A673 (cell line): ENCODE measurements at regions of chr11 and their contacts with region 1.

Region 1: GRCh38 chr11:44621140-44621681 is 55.7 kb downstream of the CD82 start:
- DNase-seq: peak; percentile 90
- H3K4me3 ChIP-seq: no peak overlapping the region
- H3K27ac ChIP-seq: no peak overlapping the region
- H3K4me1 ChIP-seq: peaks cover 9% of the 10 kb centered on the region
- H3K27me3 ChIP-seq: no peaks in the 10 kb centered on the region
- CTCF ChIP-seq: peak; percentile 100

Region 2: DNA sequence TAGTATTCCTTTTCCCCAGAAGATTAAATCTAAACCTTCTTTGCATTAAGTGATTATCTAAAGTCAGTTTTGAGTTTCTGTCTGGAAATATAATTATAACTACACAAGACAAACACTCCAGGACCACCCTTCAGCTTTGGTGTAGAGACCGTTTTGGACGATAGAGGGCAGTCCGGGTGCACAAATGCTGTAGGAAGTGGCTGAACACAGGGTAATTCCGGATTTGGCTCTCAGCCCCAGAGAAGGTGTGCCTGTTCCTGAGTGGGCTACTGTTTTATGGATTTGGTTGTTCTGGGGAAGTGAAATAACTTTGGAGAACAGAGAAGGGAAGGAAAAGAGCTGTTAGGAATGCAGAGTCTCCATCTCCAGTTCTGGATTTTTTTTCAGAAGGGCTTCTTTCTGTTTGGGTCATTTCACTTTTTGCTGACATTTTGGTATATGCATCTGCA is 511.0 kb before region 1 on chr11:
- CTCF ChIA-PET with region 1: interaction called, 14 read pairs
- POLR2A ChIA-PET with region 1: no interaction called
- intact Hi-C with region 1: loop called (anchors 1 kb)
- DNase-seq: peak; percentile 90
- H3K4me3 ChIP-seq: no peak overlapping the region
- H3K27ac ChIP-seq: no peak overlapping the region
- H3K4me1 ChIP-seq: peaks cover 32% of the 10 kb centered on the region
- H3K27me3 ChIP-seq: no peaks in the 10 kb centered on the region
- CTCF ChIP-seq: peak; percentile 100

Region 3: DNA sequence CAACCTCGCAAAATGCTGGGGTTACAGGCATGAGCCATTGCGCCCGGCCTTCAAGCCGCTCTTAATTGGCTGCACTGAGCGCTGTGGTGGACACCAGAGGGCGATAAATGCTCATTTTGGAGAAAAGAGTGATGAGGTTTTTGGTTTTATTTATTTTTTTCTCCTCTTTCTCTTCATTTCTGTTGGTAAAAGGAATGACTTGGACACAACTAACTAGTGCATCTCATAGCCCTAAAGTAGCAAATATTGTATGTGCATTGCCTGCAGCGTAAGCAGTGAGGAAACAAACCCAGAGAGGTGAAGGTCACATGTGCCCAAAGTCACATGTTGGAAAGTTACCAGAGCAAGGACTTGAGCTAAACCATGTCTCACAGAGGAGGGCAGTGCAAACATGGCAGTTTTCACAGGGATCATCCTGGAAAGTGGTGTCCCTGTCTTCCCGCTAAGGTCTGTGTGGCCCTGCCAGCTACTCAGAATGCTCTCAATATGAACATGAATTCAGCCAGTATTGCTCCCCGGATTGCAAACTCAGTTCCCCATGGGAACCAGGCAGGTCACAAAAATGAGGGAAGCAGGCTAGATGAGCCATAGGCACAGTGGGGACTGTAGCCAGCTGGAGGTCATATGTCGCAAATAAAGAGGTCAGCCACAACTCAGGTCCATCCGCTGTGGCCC is 64.3 kb before region 1 on chr11:
- CTCF ChIA-PET with region 1: interaction called, 110 read pairs
- POLR2A ChIA-PET with region 1: no interaction called
- intact Hi-C with region 1: loop called (anchors 1 kb)
- DNase-seq: peak; percentile 82
- H3K4me3 ChIP-seq: no peak overlapping the region
- H3K27ac ChIP-seq: no peak overlapping the region
- H3K4me1 ChIP-seq: peaks cover 5% of the 10 kb centered on the region
- H3K27me3 ChIP-seq: no peaks in the 10 kb centered on the region
- CTCF ChIP-seq: peak; percentile 92

Region 4: GRCh38 chr11:44585421-44585820 is 35.8 kb before region 1 on chr11:
- CTCF ChIA-PET with region 1: interaction called, 10 read pairs
- POLR2A ChIA-PET with region 1: no interaction called
- intact Hi-C with region 1: no loop called
- DNase-seq: no peak
- H3K4me3 ChIP-seq: no peak overlapping the region
- H3K27ac ChIP-seq: no peak overlapping the region
- H3K4me1 ChIP-seq: no peaks in the 10 kb centered on the region
- H3K27me3 ChIP-seq: no peaks in the 10 kb centered on the region
- CTCF ChIP-seq: no peak

Region 5: DNA sequence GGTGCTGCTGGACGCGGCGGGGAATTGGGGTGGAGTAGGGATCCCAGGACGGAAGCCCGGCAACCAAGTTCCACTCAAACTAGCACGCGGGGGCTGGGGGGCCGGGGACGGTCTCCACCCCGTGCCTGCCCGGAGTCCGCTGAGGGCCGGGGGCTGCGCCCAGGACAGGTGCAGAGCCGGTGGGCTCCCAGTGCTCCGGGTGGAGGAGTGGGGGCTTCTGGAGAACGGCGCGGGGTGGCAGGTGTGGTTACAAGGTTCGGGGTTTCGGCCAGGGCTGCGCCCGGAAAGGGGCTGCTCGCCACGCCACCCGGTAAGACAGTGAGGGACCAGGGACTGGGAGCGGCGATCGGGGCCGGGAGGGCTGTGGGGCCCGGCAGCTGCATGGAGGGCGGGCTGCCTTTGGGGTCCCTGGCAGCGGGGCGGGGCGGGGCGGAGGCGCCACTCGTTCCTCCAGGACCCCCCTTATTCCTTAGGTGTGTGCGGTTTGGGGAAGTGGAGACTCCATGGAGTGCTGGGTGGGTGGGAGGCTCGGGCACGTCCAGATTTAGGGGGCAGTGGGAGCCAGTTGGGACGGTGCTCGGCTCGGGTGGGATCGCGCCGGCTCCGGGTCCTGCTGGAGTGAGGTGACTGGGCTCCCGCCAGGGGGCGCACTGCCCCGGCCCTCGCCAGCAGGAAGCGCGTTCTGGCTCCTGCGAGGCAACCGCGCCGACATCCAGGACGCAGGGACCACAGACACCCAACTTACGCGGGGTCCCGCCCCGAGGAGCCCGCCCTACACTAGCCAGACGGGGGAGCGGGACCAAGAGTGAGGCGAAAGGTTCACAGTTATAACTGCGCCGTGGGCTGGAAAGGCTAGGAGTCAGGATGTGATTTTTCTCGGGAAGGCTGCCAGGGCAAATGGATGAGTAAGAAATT is 106.4 kb after region 1 on chr11:
- CTCF ChIA-PET with region 1: no interaction called
- POLR2A ChIA-PET with region 1: no interaction called
- intact Hi-C with region 1: loop called (anchors 2 kb)
- DNase-seq: peak; percentile 93
- H3K4me3 ChIP-seq: peak overlapping the region; percentile 77
- H3K27ac ChIP-seq: peak overlapping the region; percentile 44
- H3K4me1 ChIP-seq: peaks cover 37% of the 10 kb centered on the region
- H3K27me3 ChIP-seq: no peaks in the 10 kb centered on the region
- CTCF ChIP-seq: peak; percentile 100

Region 6: DNA sequence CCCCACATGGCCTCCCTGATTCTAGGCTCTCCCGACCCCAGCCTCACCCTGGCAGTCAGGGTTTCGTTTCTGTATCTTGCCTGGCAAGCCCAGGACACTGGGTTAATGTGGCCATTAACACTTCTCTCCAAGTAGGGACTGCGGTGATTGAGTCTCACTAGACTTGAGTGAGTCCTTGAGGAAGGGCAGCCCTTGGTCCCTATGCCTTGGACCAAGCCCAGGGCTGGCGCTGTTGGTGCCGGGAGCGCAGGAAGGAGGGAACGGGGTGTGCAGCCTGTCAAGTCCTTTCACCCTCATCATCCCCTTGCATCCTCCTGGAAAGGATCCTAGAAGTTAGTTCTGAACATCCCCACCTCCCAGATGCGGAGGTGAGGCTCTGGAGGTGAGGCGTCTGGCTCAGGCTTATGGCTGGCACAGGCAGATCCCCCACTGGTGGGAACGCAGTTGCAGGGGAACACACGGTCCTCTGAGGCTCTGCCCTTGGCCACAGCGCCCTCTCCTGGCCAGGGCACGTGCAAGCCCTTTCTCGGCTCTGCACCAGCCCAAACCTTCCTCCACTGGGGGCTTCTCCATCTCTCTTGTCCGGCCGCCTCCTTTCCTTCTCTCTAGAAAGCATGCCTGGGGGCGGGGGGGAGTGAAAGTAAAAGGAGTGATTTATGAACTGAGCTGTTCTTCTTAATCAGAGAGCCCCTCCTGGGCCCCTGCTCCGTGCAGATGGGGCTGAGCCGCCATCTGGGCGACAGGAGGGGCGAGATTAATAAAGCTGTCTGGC is 272.8 kb after region 1 on chr11:
- CTCF ChIA-PET with region 1: interaction called, 6 read pairs
- POLR2A ChIA-PET with region 1: no interaction called
- intact Hi-C with region 1: loop called (anchors 1 kb)
- DNase-seq: peak; percentile 93
- H3K4me3 ChIP-seq: no peak overlapping the region
- H3K27ac ChIP-seq: no peak overlapping the region
- H3K4me1 ChIP-seq: peaks cover 12% of the 10 kb centered on the region
- H3K27me3 ChIP-seq: no peaks in the 10 kb centered on the region
- CTCF ChIP-seq: peak; percentile 100

Region 7: DNA sequence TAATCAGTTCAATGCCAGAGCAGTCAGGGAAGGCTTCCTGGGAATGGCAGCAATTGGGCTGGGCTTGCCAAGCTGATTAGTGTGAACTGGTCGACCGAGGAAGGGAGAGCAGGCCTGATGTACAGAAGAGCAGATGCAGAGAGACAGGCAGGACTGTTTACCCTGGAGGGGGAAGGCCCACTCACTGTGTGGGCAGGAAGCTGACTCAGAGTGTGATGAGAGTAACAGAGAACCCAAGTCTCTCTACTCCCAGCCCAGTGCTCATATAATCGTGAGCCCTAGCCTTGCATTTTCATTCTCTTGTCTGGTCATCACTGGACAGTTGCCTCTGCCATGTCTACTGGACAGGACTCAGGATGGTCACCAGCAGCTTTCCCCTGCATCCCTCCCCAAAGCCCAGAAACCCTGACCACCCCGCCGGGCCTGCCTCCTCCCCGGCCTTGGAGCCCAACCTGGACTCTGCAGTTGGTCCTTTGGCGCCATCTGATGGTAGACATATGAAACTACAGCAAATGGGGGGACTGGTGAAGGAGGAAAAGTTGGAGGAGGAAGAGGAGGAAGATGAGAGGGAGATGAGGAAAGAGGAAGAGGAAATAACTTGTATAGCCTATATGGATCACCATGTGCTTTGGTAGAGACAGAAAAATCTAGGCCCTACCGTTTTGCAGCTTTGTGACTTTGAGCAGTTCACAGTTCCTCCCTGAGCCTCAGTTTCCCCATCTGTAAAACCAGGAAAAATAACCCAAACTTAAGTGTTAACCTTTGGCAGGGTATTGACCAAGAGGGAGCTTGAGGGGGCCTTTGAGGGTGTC is 481.8 kb after region 1 on chr11:
- CTCF ChIA-PET with region 1: no interaction called
- POLR2A ChIA-PET with region 1: no interaction called
- intact Hi-C with region 1: loop called (anchors 5 kb)
- DNase-seq: peak; percentile 85
- H3K4me3 ChIP-seq: no peak overlapping the region
- H3K27ac ChIP-seq: no peak overlapping the region
- H3K4me1 ChIP-seq: no peaks in the 10 kb centered on the region
- H3K27me3 ChIP-seq: peaks cover 26% of the 10 kb centered on the region
- CTCF ChIP-seq: peak; percentile 100